Endothelial cell of umbilical vein (primary cell): ENCODE measurements at regions of chr14 and their contacts with region 1.

Region 1: GRCh38 chr14:23588884-23589598 is 10.5 kb upstream of the JPH4 start:
- DNase-seq: peak; percentile 87
- H3K4me3 ChIP-seq: no peak overlapping the region
- H3K27ac ChIP-seq: no peak overlapping the region
- H3K4me1 ChIP-seq: peaks cover 5% of the 10 kb centered on the region
- H3K27me3 ChIP-seq: no peaks in the 10 kb centered on the region
- CTCF ChIP-seq: peak; percentile 76 to 90
- POLR2A ChIP-seq: no peak

Region 2: GRCh38 chr14:23421594-23421993 is 167.4 kb before region 1 on chr14:
- CTCF ChIA-PET with region 1: no interaction called
- POLR2A ChIA-PET with region 1: no interaction called
- dilution Hi-C with region 1: no loop called
- intact Hi-C with region 1: no loop called
- DNase-seq: no peak
- H3K4me3 ChIP-seq: no peak overlapping the region
- H3K27ac ChIP-seq: no peak overlapping the region
- H3K4me1 ChIP-seq: no peaks in the 10 kb centered on the region
- H3K27me3 ChIP-seq: no peaks in the 10 kb centered on the region
- CTCF ChIP-seq: no peak
- POLR2A ChIP-seq: no peak

Region 3: GRCh38 chr14:23528555-23528954 is 60.5 kb before region 1 on chr14:
- CTCF ChIA-PET with region 1: no interaction called
- POLR2A ChIA-PET with region 1: no interaction called
- dilution Hi-C with region 1: no loop called
- intact Hi-C with region 1: no loop called
- DNase-seq: no peak
- H3K4me3 ChIP-seq: no peak overlapping the region
- H3K27ac ChIP-seq: no peak overlapping the region
- H3K4me1 ChIP-seq: no peaks in the 10 kb centered on the region
- H3K27me3 ChIP-seq: no peaks in the 10 kb centered on the region
- CTCF ChIP-seq: peak in 1 of 2 donors; percentile 5
- POLR2A ChIP-seq: no peak

Region 4: GRCh38 chr14:23766737-23767401 is 177.8 kb after region 1 on chr14:
- CTCF ChIA-PET with region 1: no interaction called
- POLR2A ChIA-PET with region 1: no interaction called
- dilution Hi-C with region 1: no loop called
- intact Hi-C with region 1: no loop called
- DNase-seq: no peak
- H3K4me3 ChIP-seq: no peak overlapping the region
- H3K27ac ChIP-seq: no peak overlapping the region
- H3K4me1 ChIP-seq: no peaks in the 10 kb centered on the region
- H3K27me3 ChIP-seq: no peaks in the 10 kb centered on the region
- CTCF ChIP-seq: no peak
- POLR2A ChIP-seq: no peak

Region 5: DNA sequence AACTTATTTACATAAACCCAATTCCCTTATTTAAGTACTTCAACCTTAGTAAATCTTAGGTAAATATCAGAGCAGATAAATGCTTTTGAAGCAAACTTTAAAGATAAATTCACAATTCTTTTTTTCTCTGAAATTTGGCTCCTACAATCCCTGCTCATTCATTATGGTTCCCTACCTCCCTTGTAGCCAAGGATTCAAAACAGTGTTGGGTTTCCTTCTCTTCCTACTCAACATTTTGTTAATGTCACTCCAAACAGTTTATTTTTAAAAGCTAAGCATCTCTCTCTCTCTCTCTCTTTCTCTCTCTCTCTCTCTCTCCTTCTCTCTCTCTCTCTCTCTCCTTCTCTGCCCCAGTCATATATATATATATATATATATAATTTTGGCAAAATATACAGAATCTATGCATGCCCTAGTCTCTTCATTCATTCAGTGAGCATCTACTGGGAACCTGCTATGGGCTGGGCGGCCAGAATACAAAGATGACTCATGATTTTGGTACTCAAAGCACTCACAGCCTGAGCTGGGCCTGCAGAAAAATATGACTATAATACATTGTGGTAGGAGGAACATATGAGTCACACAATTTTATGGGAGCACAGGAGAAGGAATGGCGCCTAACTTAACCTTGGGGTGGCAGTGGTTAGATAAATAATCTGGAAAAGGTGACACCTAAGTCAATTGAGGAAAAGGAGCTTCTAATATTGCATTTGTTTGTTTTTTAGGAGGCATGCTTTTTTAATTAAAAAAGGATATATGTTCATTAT is 240.9 kb after region 1 on chr14:
- CTCF ChIA-PET with region 1: no interaction called
- POLR2A ChIA-PET with region 1: no interaction called
- dilution Hi-C with region 1: no loop called
- intact Hi-C with region 1: no loop called
- DNase-seq: peak; percentile 88
- H3K4me3 ChIP-seq: no peak overlapping the region
- H3K27ac ChIP-seq: peak overlapping the region; percentile 5
- H3K4me1 ChIP-seq: peaks cover 8% of the 10 kb centered on the region
- H3K27me3 ChIP-seq: no peaks in the 10 kb centered on the region
- CTCF ChIP-seq: no peak
- POLR2A ChIP-seq: no peak

Region 6: DNA sequence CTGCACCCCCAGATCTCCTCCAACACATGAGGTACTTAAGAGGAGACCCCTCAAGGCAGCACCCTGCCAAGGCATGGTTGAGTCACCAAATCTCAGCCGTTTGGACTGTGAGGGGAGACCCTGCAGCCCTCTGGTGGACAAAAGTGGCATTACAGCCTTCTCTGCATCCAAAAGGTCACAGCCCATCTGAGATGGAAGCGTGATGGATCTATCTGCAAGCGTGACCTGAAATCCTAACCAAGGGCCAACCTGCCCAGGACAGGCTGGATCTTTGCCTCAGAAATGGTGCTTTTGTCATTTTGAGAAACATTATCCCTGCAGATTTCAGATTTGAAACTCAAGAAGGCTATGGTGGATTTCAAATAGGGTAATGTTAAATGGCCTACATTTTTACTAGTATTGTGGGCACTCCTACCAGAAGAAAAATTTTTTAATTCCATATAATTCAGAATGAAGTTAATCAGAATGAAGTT is 340.8 kb after region 1 on chr14:
- CTCF ChIA-PET with region 1: interaction called, 31 read pairs
- POLR2A ChIA-PET with region 1: no interaction called
- dilution Hi-C with region 1: no loop called
- intact Hi-C with region 1: loop called (anchors 1 kb)
- DNase-seq: peak; percentile 74
- H3K4me3 ChIP-seq: no peak overlapping the region
- H3K27ac ChIP-seq: no peak overlapping the region
- H3K4me1 ChIP-seq: no peaks in the 10 kb centered on the region
- H3K27me3 ChIP-seq: peaks cover 0 to 5% of the 10 kb centered on the region in 2 experiments
- CTCF ChIP-seq: peak; percentile 93
- POLR2A ChIP-seq: no peak

Region 7: DNA sequence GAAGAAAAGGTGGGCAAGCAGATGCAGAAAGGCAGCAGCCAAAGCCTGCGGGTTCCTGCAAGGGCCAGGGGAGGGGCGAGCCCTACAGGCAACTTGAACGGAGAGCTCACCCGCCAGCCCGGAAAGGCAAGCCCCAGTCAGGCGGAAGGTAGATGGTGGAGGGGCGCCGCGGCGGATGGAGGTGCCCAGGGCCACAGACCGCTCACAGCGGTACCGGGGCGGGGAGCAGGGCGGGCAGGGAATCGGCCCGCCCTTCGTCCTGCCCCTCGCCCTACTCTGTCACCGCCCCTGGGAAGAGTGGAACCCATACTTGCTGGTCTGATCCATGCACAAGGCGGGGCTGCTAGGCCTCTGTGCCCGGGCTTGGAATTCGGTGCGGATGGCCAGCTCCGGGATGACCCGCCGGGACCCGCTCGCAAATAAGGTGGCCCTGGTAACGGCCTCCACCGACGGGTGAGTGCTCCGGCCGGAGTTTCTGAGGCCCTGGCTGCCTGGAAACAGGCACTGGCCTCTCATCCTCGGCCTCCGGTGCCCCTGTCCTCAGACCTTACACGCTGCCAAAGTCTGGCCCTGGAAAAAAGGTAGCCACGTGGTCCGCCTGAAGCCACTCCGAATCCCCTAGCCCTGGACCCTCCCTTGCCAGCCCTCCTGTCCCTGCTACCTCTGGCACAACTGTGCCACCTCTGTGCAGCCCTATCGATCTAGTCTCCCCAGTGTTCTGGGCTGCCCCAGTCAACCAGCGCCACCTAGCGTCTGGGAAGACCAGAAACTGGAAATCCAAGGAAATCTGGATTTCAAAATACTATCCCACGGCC is 364.6 kb after region 1 on chr14 and contains the start of gene DHRS4:
- CTCF ChIA-PET with region 1: no interaction called
- POLR2A ChIA-PET with region 1: no interaction called
- dilution Hi-C with region 1: no loop called
- intact Hi-C with region 1: loop called (anchors 1 kb)
- DNase-seq: peak; percentile 82
- H3K4me3 ChIP-seq: peak within 1 kb of the TSS; percentile 67 to 80 (median 72)
- H3K27ac ChIP-seq: peak within 1 kb of the TSS; percentile 44
- H3K4me1 ChIP-seq: no peaks in the 10 kb centered on the region
- H3K27me3 ChIP-seq: no peaks in the 10 kb centered on the region
- CTCF ChIP-seq: peak; percentile 85 to 88
- POLR2A ChIP-seq: peak; percentile 85
- total RNA-seq, gene DHRS4: 19.2 and 24.4 TPM in 2 replicates